T-cell (primary cell): ENCODE measurements at regions of chr3 and their contacts with region 1.

Region 1: GRCh38 chr3:59334585-59334984 is 284.8 kb upstream of the CFAP20DC start:
- DNase-seq: no peak
- ATAC-seq: no peak
- H3K4me3 ChIP-seq: no peak overlapping the region
- H3K4me3 Mint-ChIP-seq: no peak overlapping the region
- H3K27ac ChIP-seq: no peak overlapping the region
- H3K27ac Mint-ChIP-seq: no peak overlapping the region
- H3K4me1 ChIP-seq: no peaks in the 10 kb centered on the region
- H3K4me1 Mint-ChIP-seq: peaks cover 0 to 1% (median 1%) of the 10 kb centered on the region in 3 donors
- H3K27me3 ChIP-seq: no peaks in the 10 kb centered on the region
- H3K27me3 Mint-ChIP-seq: no peaks in the 10 kb centered on the region

Region 2: GRCh38 chr3:59726279-59726678 is 391.7 kb after region 1 on chr3:
- CTCF ChIA-PET with region 1: no interaction called
- POLR2A ChIA-PET with region 1: interaction called in 1 of 2 experiments, 10 read pairs
- DNase-seq: no peak
- ATAC-seq: no peak
- H3K4me3 ChIP-seq: no peak overlapping the region
- H3K4me3 Mint-ChIP-seq: no peak overlapping the region
- H3K27ac ChIP-seq: no peak overlapping the region
- H3K27ac Mint-ChIP-seq: no peak overlapping the region
- H3K4me1 ChIP-seq: peaks cover 0 to 6% of the 10 kb centered on the region in 2 experiments
- H3K4me1 Mint-ChIP-seq: peaks cover 13 to 25% (median 18%) of the 10 kb centered on the region in 3 donors
- H3K27me3 ChIP-seq: no peaks in the 10 kb centered on the region
- H3K27me3 Mint-ChIP-seq: peaks cover 0 to 3% of the 10 kb centered on the region in 2 donors